SK-N-SH (cell line): ENCODE measurements at regions of chr6 and their contacts with region 1.

Region 1: GRCh38 chr6:135955099-135955498 is 103.6 kb downstream of the PDE7B start:
- DNase-seq: no peak
- H3K4me3 ChIP-seq: no peak overlapping the region
- H3K27ac ChIP-seq: no peak overlapping the region
- H3K4me1 ChIP-seq: no peaks in the 10 kb centered on the region
- H3K27me3 ChIP-seq: no peaks in the 10 kb centered on the region
- CTCF ChIP-seq: no peak
- EP300 ChIP-seq: no peak
- RAD21 ChIP-seq: no peak

Region 2: DNA sequence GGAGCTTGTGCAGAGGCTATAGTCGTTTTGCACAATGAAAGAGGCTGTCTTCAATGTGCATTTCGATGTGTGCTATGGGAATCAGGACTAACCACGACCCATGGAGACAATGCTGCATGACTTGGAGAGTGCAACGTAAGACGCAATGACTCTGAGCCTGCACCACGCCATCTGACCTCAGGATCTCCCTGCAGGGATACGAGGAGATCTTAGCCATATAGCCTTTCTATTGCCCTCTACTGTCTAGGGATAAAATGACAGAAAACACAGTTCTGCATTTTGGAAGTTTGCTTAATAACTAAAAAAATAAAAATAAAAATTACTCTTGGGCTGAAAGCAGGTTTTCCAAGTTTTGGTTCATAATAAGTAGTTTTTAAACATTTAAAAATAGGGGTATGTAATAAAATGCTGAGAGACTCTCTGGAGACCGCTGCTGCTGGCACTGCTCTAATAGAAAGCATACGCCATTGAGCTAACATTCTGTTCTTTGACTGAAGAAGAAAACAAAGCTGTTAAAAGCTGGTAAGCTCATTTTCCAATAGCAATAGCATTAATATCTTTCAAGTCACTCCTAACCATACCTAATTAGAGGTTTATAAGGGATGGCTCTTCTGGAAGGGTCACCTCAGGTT is 16.4 kb before region 1 on chr6:
- CTCF ChIA-PET with region 1: interaction called, 12 read pairs
- POLR2A ChIA-PET with region 1: no interaction called
- DNase-seq: peak; percentile 33
- H3K4me3 ChIP-seq: no peak overlapping the region
- H3K27ac ChIP-seq: peak overlapping the region; percentile 30 to 85
- H3K4me1 ChIP-seq: peaks cover 11 to 21% of the 10 kb centered on the region in 2 experiments
- H3K27me3 ChIP-seq: no peaks in the 10 kb centered on the region
- CTCF ChIP-seq: peak; percentile 47
- EP300 ChIP-seq: no peak
- RAD21 ChIP-seq: peak; percentile 59